ENCODE measurements at regions of chr7 and their contacts with region 1.

Region 1: GRCh38 chr7:113159746-113160339 is 41.5 kb upstream of the SMIM30 start:
- DNase-seq: no peak
- ATAC-seq: no peak

Region 2: GRCh38 chr7:113421696-113422330 is 262.0 kb after region 1 on chr7:
- intact Hi-C with region 1: loop called (anchors 10 kb)
- DNase-seq: peak; percentile 79
- ATAC-seq: peak; percentile 82

Measured in Right ventricle myocardium inferior (tissue), 1 donor.